Left cardiac atrium (tissue), 4 donors: ENCODE measurements at regions of chr2 and their contacts with region 1.

Region 1: DNA sequence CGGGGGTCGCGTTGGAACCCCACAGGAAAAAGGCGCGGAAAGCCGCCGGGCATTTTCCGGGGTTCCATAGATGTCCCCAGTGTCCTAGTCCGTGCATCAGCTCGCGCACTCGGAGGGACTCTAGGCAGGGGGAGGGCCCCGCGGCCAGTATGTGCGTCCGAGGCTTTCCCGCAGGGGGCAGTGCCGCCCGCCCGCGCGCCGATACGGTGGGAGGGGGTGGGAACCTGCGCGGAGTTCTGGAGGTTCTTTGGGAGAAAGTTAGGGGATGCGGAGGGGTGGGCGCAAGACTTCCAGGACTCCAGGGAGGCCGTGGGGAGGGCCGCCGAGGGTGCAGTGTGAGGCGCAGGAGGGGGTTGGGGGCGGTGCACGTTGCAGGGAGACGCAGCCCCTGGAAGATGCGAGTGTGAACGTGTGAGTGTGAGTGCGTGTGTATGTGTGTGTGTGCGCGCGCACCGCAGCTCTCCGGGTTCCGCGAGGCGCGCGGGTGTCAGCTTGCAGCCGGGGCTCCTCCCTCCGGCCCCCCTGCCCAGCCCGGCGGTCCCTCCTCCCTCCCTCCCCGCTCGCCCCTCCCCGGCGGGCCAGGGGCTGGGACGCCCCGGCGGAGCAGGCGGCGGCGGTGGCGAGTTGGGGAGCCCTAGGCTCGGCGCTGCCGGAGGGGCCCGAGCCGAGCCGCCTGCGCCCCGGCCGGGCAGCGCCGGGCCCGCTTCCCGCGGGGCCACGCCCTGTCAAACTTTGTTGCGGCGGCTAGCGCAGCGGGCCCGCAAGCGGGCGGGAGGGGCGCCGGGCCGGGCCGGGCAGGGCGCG is at the start of gene TCF7L1:
- DNase-seq: peak; percentile 89
- ATAC-seq: peak; percentile 93 to 94
- total RNA-seq, gene TCF7L1: 17.1 to 17.3 TPM

Region 2: DNA sequence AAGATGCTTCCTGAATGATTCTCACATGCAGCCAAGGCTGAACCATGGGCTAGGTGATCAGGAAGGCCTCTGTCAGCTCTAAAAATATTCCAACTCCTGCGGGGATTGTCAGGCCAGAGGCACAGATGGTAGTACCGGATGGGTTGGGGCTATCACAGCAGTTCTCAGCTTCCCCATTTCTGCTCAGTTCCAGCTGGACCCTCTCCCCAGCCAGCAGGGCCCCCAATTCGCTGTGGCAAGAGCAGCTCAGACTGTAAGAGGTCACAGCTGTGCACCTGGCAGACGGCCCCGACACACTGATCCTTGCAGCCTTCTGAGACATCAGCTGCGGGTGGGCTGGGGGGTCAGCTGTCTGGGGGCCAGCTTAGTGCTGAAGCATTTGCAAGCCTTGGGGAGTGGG is 43.5 kb before region 1 on chr2:
- intact Hi-C with region 1: no loop called
- DNase-seq: no peak
- ATAC-seq: no peak

Region 3: GRCh38 chr2:85181134-85181631 is 48.1 kb after region 1 on chr2:
- intact Hi-C with region 1: loop called in 1 of 2 experiments (anchors 5 kb)
- DNase-seq: no peak
- ATAC-seq: peak in 1 of 2 donors; percentile 10

Region 4: GRCh38 chr2:85243101-85244072 is 110.4 kb after region 1 on chr2:
- intact Hi-C with region 1: loop called in 1 of 2 experiments (anchors 1 kb)
- DNase-seq: peak; percentile 76
- ATAC-seq: peak; percentile 50 to 58

Region 5: DNA sequence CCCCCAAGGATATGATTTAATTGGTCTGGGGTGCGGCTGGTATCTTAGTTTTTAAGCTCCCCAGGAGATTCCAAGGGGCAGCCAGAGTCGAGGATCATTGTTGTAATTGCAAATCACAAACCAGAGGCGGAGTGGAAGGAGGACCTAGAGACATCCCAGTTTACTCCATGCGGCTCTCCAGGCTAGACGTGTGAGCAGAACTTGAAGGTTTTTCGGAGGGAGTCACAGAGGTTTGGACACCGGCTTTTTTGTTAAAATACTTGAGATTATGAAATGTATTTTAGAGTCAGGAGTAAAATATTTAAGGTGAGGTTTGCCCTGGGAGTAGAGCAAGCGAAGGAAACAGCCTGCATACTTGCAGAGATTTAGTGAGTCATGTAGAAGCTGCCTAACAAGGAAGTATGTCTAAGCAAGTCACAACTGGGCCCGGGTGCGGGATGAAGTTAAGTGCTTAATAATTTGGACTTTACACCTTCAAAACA is 155.2 kb after region 1 on chr2:
- intact Hi-C with region 1: loop called (anchors 1 to 2 kb)
- DNase-seq: no peak
- ATAC-seq: no peak